ENCODE measurements at regions of chr6 and their contacts with region 1.

Region 1: GRCh38 chr6:72619883-72620696 is 1.8 kb upstream of the KCNQ5 start:
- DNase-seq: peak; percentile 89
- H3K4me3 ChIP-seq: peak overlapping the region; percentile 53 to 70 (median 64)
- H3K27ac ChIP-seq: peak overlapping the region in 7 of 8 donors; percentile 28 to 79 (median 63)
- H3K4me1 ChIP-seq: peaks cover 14 to 71% (median 49%) of the 10 kb centered on the region in 6 donors
- H3K27me3 ChIP-seq: peaks cover 0 to 24% (median 8%) of the 10 kb centered on the region in 7 donors
- CTCF ChIP-seq: no peak
- POLR2A ChIP-seq: no peak

Region 2: GRCh38 chr6:72675396-72675795 is 55.3 kb after region 1 on chr6:
- intact Hi-C with region 1: no loop called
- DNase-seq: no peak
- H3K4me3 ChIP-seq: no peak overlapping the region
- H3K27ac ChIP-seq: no peak overlapping the region
- H3K4me1 ChIP-seq: no peaks in the 10 kb centered on the region
- H3K27me3 ChIP-seq: no peaks in the 10 kb centered on the region
- CTCF ChIP-seq: no peak
- POLR2A ChIP-seq: no peak

Region 3: DNA sequence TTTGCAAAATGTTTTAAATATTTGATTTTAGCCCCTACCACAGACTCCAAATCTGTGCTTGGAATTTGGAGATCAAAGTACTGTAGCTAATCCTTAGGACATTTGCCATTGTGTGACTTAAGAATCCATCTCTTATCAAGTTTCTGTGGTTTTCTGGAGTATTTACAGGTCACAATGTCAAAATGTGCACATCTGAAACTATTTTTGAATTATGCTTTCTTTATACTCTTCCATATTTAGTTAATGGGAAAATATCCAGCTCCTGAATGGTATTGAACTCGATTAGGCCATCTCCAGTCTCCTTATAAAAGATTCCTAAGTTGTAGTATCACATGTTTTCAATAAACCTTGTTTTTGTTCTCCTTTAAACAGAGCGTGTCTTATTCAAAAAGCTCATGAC is 442.7 kb after region 1 on chr6:
- intact Hi-C with region 1: no loop called
- DNase-seq: no peak
- H3K4me3 ChIP-seq: no peak overlapping the region
- H3K27ac ChIP-seq: no peak overlapping the region
- H3K4me1 ChIP-seq: no peaks in the 10 kb centered on the region
- H3K27me3 ChIP-seq: no peaks in the 10 kb centered on the region
- CTCF ChIP-seq: no peak
- POLR2A ChIP-seq: no peak

Region 4: DNA sequence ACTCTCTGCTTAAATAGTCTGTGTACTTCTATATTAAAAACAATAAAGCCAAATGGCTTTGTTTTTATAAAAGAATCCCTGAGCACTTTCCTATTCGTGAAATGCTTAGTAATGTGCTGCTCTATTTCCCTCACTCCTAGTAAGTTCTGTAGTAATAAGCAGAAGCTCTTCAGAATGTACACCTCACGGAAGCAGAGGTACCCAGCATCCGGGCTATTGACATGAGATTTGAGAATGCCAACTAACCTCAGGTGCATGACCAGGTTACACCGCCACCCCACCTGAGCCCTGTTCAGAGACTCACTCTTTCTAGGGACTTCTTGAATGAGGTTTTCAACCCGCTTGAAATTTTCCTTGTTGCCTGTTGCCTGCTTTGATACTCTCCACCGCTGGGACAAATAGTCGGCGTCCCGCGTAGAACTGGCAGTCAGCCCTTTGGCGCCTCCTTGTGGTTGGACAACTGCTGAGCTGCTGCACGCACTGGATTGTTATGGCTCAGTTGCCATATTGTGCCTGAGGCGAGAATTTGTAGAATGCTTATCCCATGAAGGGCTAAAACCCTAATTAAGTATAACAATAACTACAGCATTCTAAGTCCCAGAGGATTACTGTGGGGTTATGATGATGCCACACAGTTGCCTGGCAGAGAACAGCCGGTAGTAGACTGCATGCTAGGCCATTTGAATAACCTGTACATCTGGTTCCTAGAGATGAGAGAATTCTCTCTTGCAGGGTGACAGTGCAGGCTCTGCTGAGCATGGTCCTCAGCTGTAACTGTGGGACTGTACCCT is 509.8 kb after region 1 on chr6:
- intact Hi-C with region 1: loop called (anchors 5 kb)
- DNase-seq: peak; percentile 92
- H3K4me3 ChIP-seq: peak overlapping the region in 1 of 8 donors; percentile 23
- H3K27ac ChIP-seq: no peak overlapping the region
- H3K4me1 ChIP-seq: peaks cover 0 to 8% (median 3%) of the 10 kb centered on the region in 6 donors
- H3K27me3 ChIP-seq: no peaks in the 10 kb centered on the region
- CTCF ChIP-seq: peak; percentile 65 to 88 (median 79)
- POLR2A ChIP-seq: no peak